CD8-positive, alpha-beta T cell (primary cell): ENCODE measurements at regions of chr17 and their contacts with region 1.

Region 1: GRCh38 chr17:37047631-37048104 is 98.9 kb downstream of the AATF start:
- DNase-seq: peak; percentile 59 to 87 (median 81)
- ATAC-seq: peak; percentile 90
- H3K4me3 ChIP-seq: no peak overlapping the region
- H3K4me3 Mint-ChIP-seq: no peak overlapping the region
- H3K27ac ChIP-seq: no peak overlapping the region
- H3K27ac Mint-ChIP-seq: peak overlapping the region; percentile 71
- H3K4me1 ChIP-seq: no peaks in the 10 kb centered on the region
- H3K4me1 Mint-ChIP-seq: peaks cover 12% of the 10 kb centered on the region
- H3K27me3 ChIP-seq: no peaks in the 10 kb centered on the region
- H3K27me3 Mint-ChIP-seq: no peaks in the 10 kb centered on the region
- CTCF ChIP-seq: peak; percentile 68

Region 2: GRCh38 chr17:36705874-36706731 is 341.6 kb before region 1 on chr17:
- CTCF ChIA-PET with region 1: interaction called, 6 read pairs
- POLR2A ChIA-PET with region 1: no interaction called
- intact Hi-C with region 1: loop called (anchors 1 to 5 kb)
- DNase-seq: peak in 8 of 9 experiments; percentile 13 to 72 (median 48)
- ATAC-seq: peak; percentile 69
- H3K4me3 ChIP-seq: no peak overlapping the region
- H3K4me3 Mint-ChIP-seq: no peak overlapping the region
- H3K27ac ChIP-seq: no peak overlapping the region
- H3K27ac Mint-ChIP-seq: no peak overlapping the region
- H3K4me1 ChIP-seq: no peaks in the 10 kb centered on the region
- H3K4me1 Mint-ChIP-seq: no peaks in the 10 kb centered on the region
- H3K27me3 ChIP-seq: peaks cover 11 to 12% of the 10 kb centered on the region in 2 experiments
- H3K27me3 Mint-ChIP-seq: peaks cover 33% of the 10 kb centered on the region
- CTCF ChIP-seq: peak; percentile 73

Region 3: DNA sequence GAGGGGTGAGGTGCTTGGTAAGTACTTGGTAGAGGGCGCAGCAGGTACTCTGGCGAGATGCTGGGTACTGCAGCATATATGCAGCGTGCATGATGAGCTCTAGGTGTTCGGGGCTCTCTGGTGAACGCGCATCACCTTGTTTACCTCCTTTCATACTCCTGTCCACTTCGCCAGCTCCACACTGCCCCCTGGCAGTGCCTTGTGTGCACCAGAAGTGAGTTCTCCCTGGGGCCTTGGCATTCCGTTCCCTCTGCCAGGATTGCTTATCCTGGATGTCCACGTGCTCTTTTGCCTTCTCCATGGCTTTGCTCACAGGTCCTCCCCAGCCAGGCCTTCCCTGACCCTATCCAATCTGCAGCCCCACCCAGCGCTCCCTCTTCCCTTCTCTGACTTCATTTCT is 292.1 kb before region 1 on chr17:
- CTCF ChIA-PET with region 1: no interaction called
- POLR2A ChIA-PET with region 1: no interaction called
- intact Hi-C with region 1: loop called in 1 of 2 experiments (anchors 5 kb)
- DNase-seq: peak in 7 of 9 experiments; percentile 8 to 55 (median 38)
- ATAC-seq: no peak
- H3K4me3 ChIP-seq: no peak overlapping the region
- H3K4me3 Mint-ChIP-seq: no peak overlapping the region
- H3K27ac ChIP-seq: no peak overlapping the region
- H3K27ac Mint-ChIP-seq: no peak overlapping the region
- H3K4me1 ChIP-seq: no peaks in the 10 kb centered on the region
- H3K4me1 Mint-ChIP-seq: no peaks in the 10 kb centered on the region
- H3K27me3 ChIP-seq: no peaks in the 10 kb centered on the region
- H3K27me3 Mint-ChIP-seq: peaks cover 4% of the 10 kb centered on the region
- CTCF ChIP-seq: peak; percentile 39

Region 4: GRCh38 chr17:37025847-37026530 is 21.7 kb before region 1 on chr17:
- CTCF ChIA-PET with region 1: interaction called, 3 read pairs
- POLR2A ChIA-PET with region 1: no interaction called
- intact Hi-C with region 1: loop called in 1 of 2 experiments (anchors 1 kb)
- DNase-seq: no peak
- ATAC-seq: no peak
- H3K4me3 ChIP-seq: no peak overlapping the region
- H3K4me3 Mint-ChIP-seq: no peak overlapping the region
- H3K27ac ChIP-seq: no peak overlapping the region
- H3K27ac Mint-ChIP-seq: no peak overlapping the region
- H3K4me1 ChIP-seq: no peaks in the 10 kb centered on the region
- H3K4me1 Mint-ChIP-seq: peaks cover 12% of the 10 kb centered on the region
- H3K27me3 ChIP-seq: no peaks in the 10 kb centered on the region
- H3K27me3 Mint-ChIP-seq: no peaks in the 10 kb centered on the region
- CTCF ChIP-seq: no peak

Region 5: GRCh38 chr17:37060928-37061327 is 13.3 kb after region 1 on chr17:
- CTCF ChIA-PET with region 1: interaction called, 15 read pairs
- POLR2A ChIA-PET with region 1: no interaction called
- intact Hi-C with region 1: no loop called
- DNase-seq: no peak
- ATAC-seq: no peak
- H3K4me3 ChIP-seq: no peak overlapping the region
- H3K4me3 Mint-ChIP-seq: no peak overlapping the region
- H3K27ac ChIP-seq: no peak overlapping the region
- H3K27ac Mint-ChIP-seq: no peak overlapping the region
- H3K4me1 ChIP-seq: no peaks in the 10 kb centered on the region
- H3K4me1 Mint-ChIP-seq: no peaks in the 10 kb centered on the region
- H3K27me3 ChIP-seq: no peaks in the 10 kb centered on the region
- H3K27me3 Mint-ChIP-seq: no peaks in the 10 kb centered on the region
- CTCF ChIP-seq: no peak

Region 6: GRCh38 chr17:37160944-37161343 is 113.3 kb after region 1 on chr17:
- CTCF ChIA-PET with region 1: no interaction called
- POLR2A ChIA-PET with region 1: no interaction called
- intact Hi-C with region 1: no loop called
- DNase-seq: no peak
- ATAC-seq: no peak
- H3K4me3 ChIP-seq: no peak overlapping the region
- H3K4me3 Mint-ChIP-seq: no peak overlapping the region
- H3K27ac ChIP-seq: no peak overlapping the region
- H3K27ac Mint-ChIP-seq: no peak overlapping the region
- H3K4me1 ChIP-seq: no peaks in the 10 kb centered on the region
- H3K4me1 Mint-ChIP-seq: no peaks in the 10 kb centered on the region
- H3K27me3 ChIP-seq: no peaks in the 10 kb centered on the region
- H3K27me3 Mint-ChIP-seq: no peaks in the 10 kb centered on the region
- CTCF ChIP-seq: no peak

Region 7: GRCh38 chr17:37239690-37240334 is 192.1 kb after region 1 on chr17:
- CTCF ChIA-PET with region 1: interaction called, 10 read pairs
- POLR2A ChIA-PET with region 1: no interaction called
- intact Hi-C with region 1: no loop called
- DNase-seq: peak in 2 of 9 experiments; percentile 35 to 42
- ATAC-seq: no peak
- H3K4me3 ChIP-seq: no peak overlapping the region
- H3K4me3 Mint-ChIP-seq: no peak overlapping the region
- H3K27ac ChIP-seq: no peak overlapping the region
- H3K27ac Mint-ChIP-seq: no peak overlapping the region
- H3K4me1 ChIP-seq: no peaks in the 10 kb centered on the region
- H3K4me1 Mint-ChIP-seq: no peaks in the 10 kb centered on the region
- H3K27me3 ChIP-seq: no peaks in the 10 kb centered on the region
- H3K27me3 Mint-ChIP-seq: no peaks in the 10 kb centered on the region
- CTCF ChIP-seq: peak; percentile 61